Activated CD4-positive, alpha-beta memory T cell treated with anti-CD3 and anti-CD28 coated beads for 36 hours (primary cell): ENCODE measurements at regions of chr1 and their contacts with region 1.

Region 1: GRCh38 chr1:202968840-202969295 is 1.8 kb upstream of the CYB5R1 start:
- DNase-seq: peak; percentile 36
- H3K4me3 Mint-ChIP-seq: no peak overlapping the region
- H3K27ac Mint-ChIP-seq: peak overlapping the region; percentile 60
- H3K4me1 Mint-ChIP-seq: peaks cover 28% of the 10 kb centered on the region
- H3K27me3 Mint-ChIP-seq: no peaks in the 10 kb centered on the region

Region 2: DNA sequence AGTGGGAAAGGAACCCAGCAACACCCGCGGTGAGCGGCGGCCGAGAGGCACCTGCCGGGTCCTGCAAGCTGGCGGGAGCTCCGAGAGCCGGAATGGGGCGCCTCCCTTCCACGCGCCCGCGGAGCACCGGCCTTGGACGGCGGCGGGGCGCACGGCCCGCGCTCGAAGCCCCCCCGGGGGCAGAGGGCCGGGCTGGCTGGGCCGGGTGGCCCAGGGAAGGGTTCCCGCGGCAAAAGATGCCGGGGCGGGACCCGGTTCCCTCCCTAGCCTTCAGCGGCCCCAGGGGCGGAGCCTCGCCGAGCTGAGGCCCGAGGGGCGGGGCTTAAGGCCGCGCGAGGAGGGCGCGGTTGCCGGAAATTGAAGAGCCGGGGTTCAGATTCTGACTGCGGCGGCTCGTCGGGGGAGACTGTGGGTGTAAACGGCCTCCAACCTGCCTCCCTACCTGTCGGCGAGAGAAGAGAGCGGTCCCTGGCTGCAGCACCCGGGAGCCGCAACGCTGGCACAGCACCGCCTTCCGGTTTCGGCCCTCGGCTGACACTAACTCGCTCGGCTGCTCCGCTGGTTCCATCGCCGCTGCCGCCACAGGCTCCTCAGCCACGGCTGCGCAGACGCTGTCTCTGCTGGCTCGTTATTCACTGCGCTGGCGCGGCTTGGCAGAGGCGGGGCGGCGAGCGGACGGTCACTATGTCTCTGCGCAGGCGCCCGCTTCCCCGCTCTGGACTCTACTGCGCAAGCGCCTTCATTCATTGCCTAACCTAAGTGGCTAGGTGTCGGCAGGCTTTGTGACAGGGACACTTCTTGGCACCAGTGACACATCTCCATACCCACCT is 80.1 kb before region 1 on chr1 and contains the start of gene RABIF:
- CTCF ChIA-PET with region 1: interaction called, 4 read pairs
- POLR2A ChIA-PET with region 1: no interaction called
- intact Hi-C with region 1: loop called (anchors 5 kb)
- DNase-seq: peak; percentile 98
- H3K4me3 Mint-ChIP-seq: peak within 1 kb of the TSS; percentile 93
- H3K27ac Mint-ChIP-seq: peak within 1 kb of the TSS; percentile 98
- H3K4me1 Mint-ChIP-seq: peaks cover 22% of the 10 kb centered on the region
- H3K27me3 Mint-ChIP-seq: no peaks in the 10 kb centered on the region
- total RNA-seq, gene RABIF: 9.6 to 10.1 TPM

Region 3: GRCh38 chr1:202926720-202927491 is 42.0 kb before region 1 on chr1 and contains the start of gene KLHL12:
- CTCF ChIA-PET with region 1: no interaction called
- POLR2A ChIA-PET with region 1: interaction called, 4 read pairs
- intact Hi-C with region 1: loop called (anchors 2 kb)
- DNase-seq: peak; percentile 97
- H3K4me3 Mint-ChIP-seq: peak within 1 kb of the TSS; percentile 92
- H3K27ac Mint-ChIP-seq: peak within 1 kb of the TSS; percentile 90
- H3K4me1 Mint-ChIP-seq: peaks cover 26% of the 10 kb centered on the region
- H3K27me3 Mint-ChIP-seq: no peaks in the 10 kb centered on the region
- total RNA-seq, gene KLHL12: 35.5 to 38.3 TPM

Region 4: GRCh38 chr1:202957733-202958543 is 10.9 kb before region 1 on chr1 and contains the start of gene ADIPOR1:
- CTCF ChIA-PET with region 1: no interaction called
- POLR2A ChIA-PET with region 1: no interaction called
- intact Hi-C with region 1: loop called (anchors 1 kb)
- DNase-seq: peak; percentile 96
- H3K4me3 Mint-ChIP-seq: peak within 1 kb of the TSS; percentile 81
- H3K27ac Mint-ChIP-seq: peak within 1 kb of the TSS; percentile 64
- H3K4me1 Mint-ChIP-seq: peaks cover 46% of the 10 kb centered on the region
- H3K27me3 Mint-ChIP-seq: no peaks in the 10 kb centered on the region
- total RNA-seq, gene ADIPOR1: 75.2 to 76.6 TPM

Region 5: DNA sequence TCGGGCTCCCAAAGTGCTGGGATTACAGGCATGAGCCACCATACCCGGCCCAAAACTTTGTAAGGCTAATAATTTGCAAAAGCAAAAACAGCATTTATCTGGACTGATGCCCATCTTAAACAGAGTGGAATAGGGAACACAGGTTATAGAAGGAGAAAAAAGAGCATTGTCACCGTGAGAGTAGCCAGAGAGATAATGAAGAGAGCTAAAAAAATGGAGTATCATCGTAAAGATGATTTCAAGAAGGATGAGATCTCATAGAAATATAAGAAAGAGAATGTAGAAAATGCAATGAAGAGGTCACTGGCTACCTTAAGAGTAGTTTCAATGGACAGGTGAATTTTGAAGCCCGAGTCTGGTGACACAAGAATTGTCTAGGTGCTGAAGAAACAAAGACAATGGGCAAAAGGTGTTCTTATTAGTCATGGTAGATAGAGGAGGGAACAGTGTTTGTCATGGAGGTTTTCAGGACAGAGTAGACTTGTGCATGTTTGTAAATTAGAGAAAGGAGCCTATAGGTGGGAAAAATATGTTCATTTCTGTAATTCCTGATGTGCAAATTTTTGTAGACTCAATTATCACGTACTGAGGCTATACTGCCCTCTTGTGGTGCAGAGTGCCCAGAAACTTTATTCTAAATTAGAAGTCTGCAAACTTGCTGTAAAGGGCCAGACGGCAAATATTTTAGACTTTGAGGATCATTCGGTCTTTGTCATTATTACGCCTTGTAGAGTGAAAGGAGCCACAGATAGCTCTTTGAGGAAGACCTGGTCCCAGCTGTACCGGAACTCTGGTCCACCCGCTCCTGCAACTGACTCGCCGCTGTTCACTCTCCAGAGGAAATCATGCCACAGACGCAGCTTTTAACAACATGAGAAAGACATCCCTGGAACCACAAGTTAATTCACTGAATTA is 30.2 kb after region 1 on chr1:
- CTCF ChIA-PET with region 1: interaction called, 10 read pairs
- POLR2A ChIA-PET with region 1: no interaction called
- intact Hi-C with region 1: loop called (anchors 2 kb)
- DNase-seq: peak; percentile 63
- H3K4me3 Mint-ChIP-seq: peak overlapping the region; percentile 33
- H3K27ac Mint-ChIP-seq: no peak overlapping the region
- H3K4me1 Mint-ChIP-seq: peaks cover 10% of the 10 kb centered on the region
- H3K27me3 Mint-ChIP-seq: peaks cover 22% of the 10 kb centered on the region

Region 6: GRCh38 chr1:203006948-203007871 is 38.3 kb after region 1 on chr1 and contains the start of gene TMEM183A:
- CTCF ChIA-PET with region 1: interaction called, 4 read pairs
- POLR2A ChIA-PET with region 1: interaction called, 6 read pairs
- intact Hi-C with region 1: loop called (anchors 1 kb)
- DNase-seq: peak; percentile 97
- H3K4me3 Mint-ChIP-seq: peak within 1 kb of the TSS; percentile 80
- H3K27ac Mint-ChIP-seq: peak within 1 kb of the TSS; percentile 96
- H3K4me1 Mint-ChIP-seq: peaks cover 24% of the 10 kb centered on the region
- H3K27me3 Mint-ChIP-seq: no peaks in the 10 kb centered on the region
- total RNA-seq, gene TMEM183A: 68.1 to 76.5 TPM

Region 7: GRCh38 chr1:203026031-203026989 is 57.4 kb after region 1 on chr1 and contains the start of gene PPFIA4:
- CTCF ChIA-PET with region 1: no interaction called
- POLR2A ChIA-PET with region 1: no interaction called
- intact Hi-C with region 1: loop called (anchors 1 kb)
- DNase-seq: peak; percentile 92
- H3K4me3 Mint-ChIP-seq: peak within 1 kb of the TSS; percentile 66
- H3K27ac Mint-ChIP-seq: peak within 1 kb of the TSS; percentile 9
- H3K4me1 Mint-ChIP-seq: peaks cover 13% of the 10 kb centered on the region
- H3K27me3 Mint-ChIP-seq: peaks cover 5% of the 10 kb centered on the region
- total RNA-seq, gene PPFIA4: 16.7 to 21.4 TPM